CD4-positive, alpha-beta T cell (primary cell): ENCODE measurements at regions of chrX and their contacts with region 1.

Region 1: GRCh38 chrX:130120746-130121504 is 10.6 kb upstream of the ELF4 start:
- DNase-seq: peak; percentile 39 to 83 (median 58)
- ATAC-seq: peak; percentile 89
- H3K4me3 ChIP-seq: peak overlapping the region; percentile 56
- H3K4me3 Mint-ChIP-seq: peak overlapping the region; percentile 56
- H3K27ac ChIP-seq: no peak overlapping the region
- H3K27ac Mint-ChIP-seq: no peak overlapping the region
- H3K4me1 ChIP-seq: peaks cover 31% of the 10 kb centered on the region
- H3K4me1 Mint-ChIP-seq: peaks cover 5% of the 10 kb centered on the region
- H3K27me3 ChIP-seq: no peaks in the 10 kb centered on the region
- H3K27me3 Mint-ChIP-seq: no peaks in the 10 kb centered on the region
- CTCF ChIP-seq: peak; percentile 71

Region 2: GRCh38 chrX:130091958-130092522 is 28.9 kb before region 1 on chrX:
- CTCF ChIA-PET with region 1: interaction called, 19 read pairs
- POLR2A ChIA-PET with region 1: interaction called, 3 read pairs
- intact Hi-C with region 1: no loop called
- DNase-seq: peak; percentile 62 to 95 (median 82)
- ATAC-seq: peak; percentile 97
- H3K4me3 ChIP-seq: peak overlapping the region; percentile 63
- H3K4me3 Mint-ChIP-seq: peak overlapping the region; percentile 92
- H3K27ac ChIP-seq: peak overlapping the region; percentile 55 to 68
- H3K27ac Mint-ChIP-seq: peak overlapping the region; percentile 96
- H3K4me1 ChIP-seq: peaks cover 91% of the 10 kb centered on the region
- H3K4me1 Mint-ChIP-seq: peaks cover 56% of the 10 kb centered on the region
- H3K27me3 ChIP-seq: no peaks in the 10 kb centered on the region
- H3K27me3 Mint-ChIP-seq: no peaks in the 10 kb centered on the region
- CTCF ChIP-seq: peak; percentile 21

Region 3: GRCh38 chrX:130190801-130191200 is 69.9 kb after region 1 on chrX:
- CTCF ChIA-PET with region 1: interaction called, 4 read pairs
- POLR2A ChIA-PET with region 1: no interaction called
- intact Hi-C with region 1: loop called (anchors 2 to 5 kb)
- DNase-seq: no peak
- ATAC-seq: no peak
- H3K4me3 ChIP-seq: no peak overlapping the region
- H3K4me3 Mint-ChIP-seq: no peak overlapping the region
- H3K27ac ChIP-seq: no peak overlapping the region
- H3K27ac Mint-ChIP-seq: no peak overlapping the region
- H3K4me1 ChIP-seq: no peaks in the 10 kb centered on the region
- H3K4me1 Mint-ChIP-seq: peaks cover 5% of the 10 kb centered on the region
- H3K27me3 ChIP-seq: no peaks in the 10 kb centered on the region
- H3K27me3 Mint-ChIP-seq: no peaks in the 10 kb centered on the region
- CTCF ChIP-seq: no peak

Region 4: GRCh38 chrX:130196466-130196865 is 75.5 kb after region 1 on chrX:
- CTCF ChIA-PET with region 1: interaction called, 4 read pairs
- POLR2A ChIA-PET with region 1: no interaction called
- intact Hi-C with region 1: loop called (anchors 2 to 5 kb)
- DNase-seq: no peak
- ATAC-seq: no peak
- H3K4me3 ChIP-seq: no peak overlapping the region
- H3K4me3 Mint-ChIP-seq: no peak overlapping the region
- H3K27ac ChIP-seq: no peak overlapping the region
- H3K27ac Mint-ChIP-seq: no peak overlapping the region
- H3K4me1 ChIP-seq: no peaks in the 10 kb centered on the region
- H3K4me1 Mint-ChIP-seq: peaks cover 5% of the 10 kb centered on the region
- H3K27me3 ChIP-seq: no peaks in the 10 kb centered on the region
- H3K27me3 Mint-ChIP-seq: no peaks in the 10 kb centered on the region
- CTCF ChIP-seq: no peak

Region 5: GRCh38 chrX:130401415-130402207 is 280.7 kb after region 1 on chrX and contains the start of gene RBMX2:
- CTCF ChIA-PET with region 1: no interaction called
- POLR2A ChIA-PET with region 1: no interaction called
- intact Hi-C with region 1: no loop called
- DNase-seq: peak; percentile 38 to 90 (median 62)
- ATAC-seq: peak; percentile 89
- H3K4me3 ChIP-seq: peak within 1 kb of the TSS; percentile 84
- H3K4me3 Mint-ChIP-seq: peak within 1 kb of the TSS; percentile 93
- H3K27ac ChIP-seq: peak within 1 kb of the TSS; percentile 73 to 74
- H3K27ac Mint-ChIP-seq: peak within 1 kb of the TSS; percentile 88
- H3K4me1 ChIP-seq: peaks cover 14% of the 10 kb centered on the region
- H3K4me1 Mint-ChIP-seq: peaks cover 28% of the 10 kb centered on the region
- H3K27me3 ChIP-seq: no peaks in the 10 kb centered on the region
- H3K27me3 Mint-ChIP-seq: peaks cover 8% of the 10 kb centered on the region
- CTCF ChIP-seq: no peak
- total RNA-seq, gene RBMX2: 20.5 to 21.5 TPM